T-cell (primary cell): ENCODE measurements at regions of chr1 and their contacts with region 1.

Region 1: DNA sequence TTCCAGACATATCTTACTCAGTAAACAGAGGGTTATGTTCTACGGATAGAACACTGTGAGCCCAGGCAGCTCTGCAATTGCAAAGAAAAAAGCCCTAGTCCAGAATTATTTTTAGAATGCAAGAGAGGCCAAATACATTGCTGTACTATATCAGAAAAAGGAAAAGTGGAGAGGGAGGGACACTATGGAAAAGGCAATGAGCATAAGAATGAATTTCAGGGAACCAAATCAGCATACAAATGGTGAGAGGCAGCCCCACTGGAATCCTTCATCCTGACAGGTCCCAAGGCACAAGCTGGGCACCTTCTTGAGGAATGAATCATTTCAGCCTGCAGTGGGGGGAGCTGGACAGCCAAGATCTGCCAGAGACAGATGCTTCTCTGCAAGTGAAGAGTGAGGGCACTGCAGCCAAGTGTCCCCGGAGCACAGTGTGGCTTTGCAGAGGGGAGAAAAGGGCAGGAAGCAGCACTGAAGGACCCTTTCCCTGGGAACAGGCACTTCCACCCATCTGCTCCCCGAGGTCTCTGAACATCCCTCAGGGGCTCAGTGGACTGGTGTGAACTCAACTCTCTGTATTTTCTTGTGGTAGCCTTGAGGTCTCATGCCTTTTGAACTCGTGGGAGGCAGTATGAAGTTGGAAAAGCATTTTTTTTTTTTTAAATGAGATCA is 115.6 kb downstream of the XCL2 start:
- DNase-seq: no peak
- ATAC-seq: no peak
- H3K4me3 ChIP-seq: no peak overlapping the region
- H3K4me3 Mint-ChIP-seq: no peak overlapping the region
- H3K27ac ChIP-seq: no peak overlapping the region
- H3K27ac Mint-ChIP-seq: peak overlapping the region in 1 of 2 donors; percentile 6
- H3K4me1 ChIP-seq: no peaks in the 10 kb centered on the region
- H3K4me1 Mint-ChIP-seq: peaks cover 0 to 4% (median 3%) of the 10 kb centered on the region in 3 donors
- H3K27me3 ChIP-seq: no peaks in the 10 kb centered on the region
- H3K27me3 Mint-ChIP-seq: peaks cover 0 to 5% of the 10 kb centered on the region in 2 donors

Region 2: DNA sequence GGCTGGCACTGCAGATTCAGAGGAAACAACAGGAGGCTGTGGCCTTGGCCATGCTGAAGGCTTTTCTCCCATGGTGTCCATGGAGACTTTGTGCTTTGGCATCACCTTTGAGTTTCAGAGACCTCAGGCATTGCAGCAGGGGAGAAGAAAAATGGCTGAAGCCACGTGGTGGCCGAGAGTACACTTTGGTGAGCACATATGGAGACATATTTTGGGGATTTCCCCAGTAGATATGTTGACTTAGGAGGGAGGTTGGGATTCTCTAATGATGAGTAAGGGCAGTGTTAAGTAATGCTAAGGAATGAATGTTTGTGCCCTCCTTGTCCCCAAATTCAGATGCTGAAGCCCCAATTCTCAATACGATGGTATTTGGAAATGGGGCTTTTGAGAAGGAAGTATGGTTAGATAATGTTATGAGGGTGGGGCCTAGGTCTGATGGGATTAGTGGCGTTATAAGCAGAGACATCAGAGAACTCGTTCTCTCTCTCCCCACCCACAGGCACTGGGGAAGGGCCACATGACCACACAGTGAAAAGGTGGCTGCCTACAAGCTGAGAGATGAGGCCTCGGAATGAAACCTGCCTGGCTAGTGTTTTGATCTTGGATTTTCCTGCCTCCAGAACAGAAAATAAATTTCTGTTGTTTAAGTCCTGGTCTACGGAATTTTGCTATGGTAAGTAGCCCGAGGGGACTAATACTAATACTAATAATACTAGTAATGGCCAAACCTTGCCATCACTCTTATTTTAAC is 48.9 kb before region 1 on chr1:
- CTCF ChIA-PET with region 1: no interaction called
- POLR2A ChIA-PET with region 1: no interaction called
- DNase-seq: no peak
- ATAC-seq: no peak
- H3K4me3 ChIP-seq: no peak overlapping the region
- H3K4me3 Mint-ChIP-seq: no peak overlapping the region
- H3K27ac ChIP-seq: no peak overlapping the region
- H3K27ac Mint-ChIP-seq: no peak overlapping the region
- H3K4me1 ChIP-seq: no peaks in the 10 kb centered on the region
- H3K4me1 Mint-ChIP-seq: no peaks in the 10 kb centered on the region
- H3K27me3 ChIP-seq: no peaks in the 10 kb centered on the region
- H3K27me3 Mint-ChIP-seq: no peaks in the 10 kb centered on the region

Region 3: DNA sequence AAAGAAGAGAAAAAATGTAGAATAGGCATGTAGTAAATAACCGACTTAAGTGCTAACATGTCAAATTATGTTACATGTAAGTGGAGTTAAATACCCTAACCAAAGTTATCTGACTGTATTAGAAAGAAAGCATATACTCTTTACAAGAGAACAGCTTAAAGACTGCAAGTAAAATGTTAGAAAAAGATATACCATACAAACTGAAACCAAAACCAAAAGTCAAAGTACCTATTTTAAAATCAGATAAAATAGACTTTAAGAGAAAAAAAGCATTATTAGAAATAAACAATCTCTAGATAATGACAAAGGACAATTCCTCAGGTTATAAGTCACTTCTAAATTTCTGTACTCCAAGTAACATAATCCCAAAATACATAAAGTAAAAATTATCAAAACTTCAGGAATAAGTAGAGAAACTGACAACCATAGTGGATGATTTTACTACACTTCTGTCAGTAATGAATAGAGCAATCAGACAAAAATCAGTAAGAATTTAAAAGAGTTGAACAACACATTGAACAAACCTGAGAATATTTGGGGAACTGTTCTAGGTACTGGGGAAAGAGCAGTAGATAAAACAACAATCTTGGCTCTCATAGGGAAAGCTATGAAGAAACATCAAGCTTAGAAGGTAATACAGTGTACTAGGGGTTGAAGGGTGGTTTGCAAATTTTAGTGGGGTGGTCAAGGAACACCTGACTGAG is 20.2 kb before region 1 on chr1:
- CTCF ChIA-PET with region 1: no interaction called
- POLR2A ChIA-PET with region 1: no interaction called
- DNase-seq: no peak
- ATAC-seq: no peak
- H3K4me3 ChIP-seq: no peak overlapping the region
- H3K4me3 Mint-ChIP-seq: peak overlapping the region; percentile 10 to 51 (median 49)
- H3K27ac ChIP-seq: peak overlapping the region; percentile 40
- H3K27ac Mint-ChIP-seq: peak overlapping the region; percentile 64 to 73
- H3K4me1 ChIP-seq: peaks cover 3 to 19% of the 10 kb centered on the region in 2 experiments
- H3K4me1 Mint-ChIP-seq: peaks cover 37 to 45% (median 39%) of the 10 kb centered on the region in 3 donors
- H3K27me3 ChIP-seq: no peaks in the 10 kb centered on the region
- H3K27me3 Mint-ChIP-seq: no peaks in the 10 kb centered on the region

Region 4: DNA sequence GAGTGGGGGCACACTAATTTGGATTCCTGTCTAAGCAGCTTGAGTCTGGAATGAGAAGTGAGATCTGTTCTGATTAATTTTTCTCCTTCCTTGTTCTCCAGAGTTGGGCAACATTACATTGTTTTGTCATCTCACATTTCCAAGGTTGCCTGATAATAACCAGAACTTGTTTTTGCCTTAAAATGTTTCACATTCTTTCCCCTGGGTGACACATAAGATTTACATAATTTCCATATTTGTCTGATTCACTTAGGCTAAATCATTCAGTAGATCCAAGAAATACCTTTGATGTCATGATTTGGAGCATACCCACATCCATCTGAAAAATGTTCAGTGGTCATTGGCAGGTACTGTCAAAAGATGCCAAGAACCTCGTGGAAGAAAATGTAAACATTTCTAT is 55.3 kb after region 1 on chr1:
- CTCF ChIA-PET with region 1: no interaction called
- POLR2A ChIA-PET with region 1: interaction called in 1 of 2 experiments, 16 read pairs
- DNase-seq: no peak
- ATAC-seq: no peak
- H3K4me3 ChIP-seq: no peak overlapping the region
- H3K4me3 Mint-ChIP-seq: no peak overlapping the region
- H3K27ac ChIP-seq: no peak overlapping the region
- H3K27ac Mint-ChIP-seq: peak overlapping the region; percentile 55 to 69
- H3K4me1 ChIP-seq: peaks cover 15 to 16% of the 10 kb centered on the region in 2 experiments
- H3K4me1 Mint-ChIP-seq: peaks cover 64 to 85% (median 77%) of the 10 kb centered on the region in 3 donors
- H3K27me3 ChIP-seq: no peaks in the 10 kb centered on the region
- H3K27me3 Mint-ChIP-seq: no peaks in the 10 kb centered on the region